ENCODE measurements at regions of chr1 and their contacts with region 1.

Region 1: DNA sequence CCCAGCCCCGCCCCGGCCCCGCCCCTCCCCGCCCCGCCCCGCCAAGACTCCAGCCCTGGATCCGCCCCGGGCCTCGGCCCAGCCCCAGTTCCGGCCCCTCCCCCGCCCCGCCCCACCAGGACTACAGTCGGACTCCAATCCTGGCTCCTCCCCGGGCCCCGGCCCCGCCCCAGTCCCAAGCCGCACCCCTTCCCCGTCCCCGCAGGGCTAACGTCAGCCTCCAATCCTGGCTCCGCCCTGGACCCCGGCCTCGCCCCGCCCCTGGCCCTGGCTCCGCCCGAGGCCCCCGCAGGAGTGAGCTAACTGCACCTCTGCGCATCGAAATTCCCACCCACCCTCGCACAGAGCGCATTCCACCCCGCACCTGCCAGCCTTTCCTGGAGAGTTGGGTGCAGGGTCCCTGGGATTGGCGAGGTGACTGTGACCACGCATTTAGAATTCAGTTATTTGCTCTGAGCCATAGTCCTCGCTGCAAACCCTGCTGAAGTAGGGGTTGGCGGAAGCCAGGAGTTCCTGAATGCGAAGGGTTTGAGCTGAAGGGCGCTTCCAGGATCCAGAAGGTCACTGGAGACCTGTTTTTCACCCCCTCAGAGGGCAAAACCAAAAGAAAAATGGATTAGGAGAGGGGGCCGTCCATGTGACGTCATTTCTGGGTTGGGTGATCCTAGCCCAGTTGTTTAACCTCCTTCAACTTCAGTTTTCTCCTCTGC is 588 bp upstream of the IGSF8 start:
- DNase-seq: peak; percentile 41
- H3K4me3 ChIP-seq: peak overlapping the region; percentile 65
- H3K27me3 ChIP-seq: no peaks in the 10 kb centered on the region
- CTCF ChIP-seq: no peak

Region 2: GRCh38 chr1:160078512-160079195 is 20.4 kb before region 1 on chr1:
- CTCF ChIA-PET with region 1: interaction called, 10 read pairs
- POLR2A ChIA-PET with region 1: interaction called, 7 read pairs
- DNase-seq: no peak
- H3K4me3 ChIP-seq: no peak overlapping the region
- H3K27me3 ChIP-seq: peaks cover 37% of the 10 kb centered on the region
- CTCF ChIP-seq: peak; percentile 84

Region 3: DNA sequence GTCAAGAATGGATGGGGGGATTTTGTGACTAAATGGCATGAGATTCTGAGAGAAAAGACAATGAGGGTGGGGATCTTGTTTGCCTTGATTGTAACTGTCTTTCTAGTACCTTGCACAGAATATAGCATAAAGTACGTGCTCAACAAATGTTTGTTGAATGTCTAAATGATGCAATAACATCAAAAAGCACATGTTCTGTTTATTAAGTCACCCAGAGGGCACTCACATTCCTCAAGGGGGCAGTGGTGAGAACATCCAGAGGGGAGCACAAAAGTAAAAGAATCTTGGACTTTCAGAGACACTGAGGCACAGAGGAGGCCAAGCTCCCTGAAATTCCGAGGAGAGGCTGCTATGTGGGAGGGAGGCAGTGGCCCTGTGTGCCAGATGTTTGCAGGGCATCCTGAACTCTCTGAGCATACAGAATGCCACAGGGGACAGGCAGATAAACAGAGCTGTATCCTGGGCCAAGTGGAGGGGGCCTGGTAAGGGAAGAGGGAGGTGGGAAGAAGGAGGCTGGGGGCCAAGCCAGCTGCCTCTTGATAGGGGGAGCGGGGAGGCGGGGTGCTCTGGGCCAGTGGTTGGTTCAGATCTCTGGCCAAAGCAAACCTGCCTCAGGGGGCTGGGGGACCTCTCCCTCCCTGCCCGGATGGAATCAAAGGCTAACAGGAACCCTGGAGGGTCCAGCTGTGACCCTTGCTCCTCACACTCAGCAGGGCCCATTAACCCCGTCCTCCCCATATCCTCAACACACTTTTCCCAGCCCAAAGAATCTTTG is 10.1 kb after region 1 on chr1:
- CTCF ChIA-PET with region 1: interaction called, 17 read pairs
- POLR2A ChIA-PET with region 1: no interaction called
- DNase-seq: no peak
- H3K4me3 ChIP-seq: no peak overlapping the region
- H3K27me3 ChIP-seq: peaks cover 3% of the 10 kb centered on the region
- CTCF ChIP-seq: peak; percentile 58

Region 4: DNA sequence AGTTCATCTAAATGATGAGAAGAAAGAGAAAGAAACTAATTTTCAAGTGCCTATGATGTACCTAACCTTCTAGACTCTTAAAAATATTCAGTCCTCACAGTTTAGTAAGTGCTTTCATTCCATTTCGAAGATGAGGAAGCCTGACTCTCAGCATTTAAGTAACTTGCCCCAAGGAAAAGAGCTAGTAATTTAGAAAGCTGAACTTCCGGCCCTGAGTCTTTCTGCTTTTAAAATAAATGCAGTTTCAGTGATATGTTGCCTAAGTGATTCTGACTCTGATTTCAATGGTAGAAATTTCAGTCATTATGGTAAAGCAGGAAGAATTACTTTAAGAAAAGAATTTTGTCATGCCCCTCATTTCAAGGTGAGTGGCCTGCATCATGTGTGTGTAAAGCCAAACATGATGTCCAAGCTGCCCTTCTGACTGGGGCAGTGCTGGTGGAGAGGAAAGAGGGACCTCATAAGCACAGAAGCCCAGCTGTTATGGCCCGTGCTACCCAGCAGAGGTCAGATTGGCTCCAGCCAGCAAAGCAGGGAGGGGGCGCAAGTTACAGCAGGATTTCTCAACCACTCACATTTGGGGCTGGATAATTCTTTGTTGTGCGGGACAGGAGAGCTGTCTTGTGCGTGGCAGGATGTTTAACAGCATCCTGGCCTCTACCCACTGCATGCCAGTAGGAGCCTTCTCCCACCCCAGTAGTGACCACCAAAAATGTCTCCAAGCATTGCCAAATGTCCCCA is 63.1 kb after region 1 on chr1:
- CTCF ChIA-PET with region 1: interaction called, 22 read pairs
- POLR2A ChIA-PET with region 1: no interaction called
- DNase-seq: no peak
- H3K4me3 ChIP-seq: no peak overlapping the region
- H3K27me3 ChIP-seq: no peaks in the 10 kb centered on the region; the same call in 1 of the 2 replicates
- CTCF ChIP-seq: peak; percentile 65

Region 5: DNA sequence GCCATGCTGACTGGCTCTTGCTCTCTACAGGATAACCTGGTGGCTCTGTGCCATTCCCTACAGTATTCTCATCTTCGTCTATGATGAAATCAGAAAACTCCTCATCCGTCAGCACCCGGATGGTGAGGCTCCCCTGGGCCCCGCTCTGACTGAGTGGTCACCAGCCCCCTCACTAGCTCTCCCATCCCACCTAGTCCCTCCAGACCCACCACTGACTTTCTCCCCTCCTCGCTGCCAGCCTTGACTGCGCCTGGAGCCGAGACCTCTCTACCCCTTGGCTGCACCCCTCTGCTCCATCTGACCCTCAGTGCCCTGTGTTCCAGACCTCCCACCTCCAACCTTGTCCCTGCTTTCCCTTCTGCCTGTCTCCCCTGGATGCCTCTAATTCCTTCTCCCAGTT is 87.2 kb after region 1 on chr1:
- CTCF ChIA-PET with region 1: interaction called, 76 read pairs
- POLR2A ChIA-PET with region 1: no interaction called
- DNase-seq: no peak
- H3K4me3 ChIP-seq: no peak overlapping the region
- H3K27me3 ChIP-seq: peaks cover 1% of the 10 kb centered on the region
- CTCF ChIP-seq: no peak

Region 6: GRCh38 chr1:160211046-160211790 is 112.2 kb after region 1 on chr1:
- CTCF ChIA-PET with region 1: interaction called, 11 read pairs
- POLR2A ChIA-PET with region 1: no interaction called
- DNase-seq: no peak
- H3K4me3 ChIP-seq: no peak overlapping the region
- H3K27me3 ChIP-seq: no peaks in the 10 kb centered on the region
- CTCF ChIP-seq: no peak

Region 7: DNA sequence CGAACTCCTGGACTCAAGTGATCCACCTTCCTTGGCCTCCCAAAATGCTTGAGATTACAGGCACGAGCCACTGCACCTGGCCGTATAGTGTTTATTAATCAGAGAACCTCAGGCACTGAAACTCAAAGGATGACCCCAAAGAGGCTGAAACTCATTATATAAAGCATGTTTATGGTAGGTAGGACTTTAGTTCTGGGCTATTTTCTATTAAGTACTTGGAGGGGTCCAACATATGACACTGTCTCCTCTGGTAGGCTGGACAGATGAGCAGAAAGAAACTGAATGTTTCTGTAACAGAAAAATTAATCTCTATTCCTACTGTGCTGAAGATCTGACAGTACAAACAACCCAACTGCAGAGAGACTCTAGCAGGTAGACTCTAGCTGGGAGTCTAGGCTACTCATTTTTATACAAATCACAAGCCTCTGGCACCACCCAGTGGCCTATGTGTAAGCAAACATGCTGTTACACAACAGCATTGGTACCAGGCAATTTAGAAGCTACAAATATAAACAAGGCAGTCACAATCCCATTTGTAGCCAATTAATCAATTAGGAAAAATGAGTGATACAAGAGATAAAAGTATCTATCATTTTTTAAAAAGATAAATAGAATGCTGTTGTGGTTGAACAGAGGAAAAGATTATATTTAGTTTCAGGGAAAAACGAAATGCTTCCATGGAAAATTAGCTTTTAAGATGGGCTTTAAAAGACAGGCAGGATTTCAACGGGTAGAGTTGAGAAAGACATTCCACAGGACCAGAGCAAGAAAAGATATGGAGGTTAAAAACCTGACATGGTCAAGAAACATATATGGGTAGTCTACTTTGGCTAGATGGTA is 152.9 kb after region 1 on chr1:
- CTCF ChIA-PET with region 1: interaction called, 50 read pairs
- POLR2A ChIA-PET with region 1: no interaction called
- DNase-seq: peak; percentile 17
- H3K4me3 ChIP-seq: no peak overlapping the region
- H3K27me3 ChIP-seq: no peaks in the 10 kb centered on the region
- CTCF ChIP-seq: peak; percentile 70